ENCODE measurements at regions of chrX and their contacts with region 1.

Region 1: GRCh38 chrX:110167952-110168451 is 149.9 kb downstream of the AMMECR1 start:
- DNase-seq: peak; percentile 60
- H3K4me3 Mint-ChIP-seq: no peak overlapping the region
- H3K27ac Mint-ChIP-seq: no peak overlapping the region
- H3K4me1 Mint-ChIP-seq: peaks cover 2% of the 10 kb centered on the region
- H3K27me3 Mint-ChIP-seq: no peaks in the 10 kb centered on the region

Region 2: DNA sequence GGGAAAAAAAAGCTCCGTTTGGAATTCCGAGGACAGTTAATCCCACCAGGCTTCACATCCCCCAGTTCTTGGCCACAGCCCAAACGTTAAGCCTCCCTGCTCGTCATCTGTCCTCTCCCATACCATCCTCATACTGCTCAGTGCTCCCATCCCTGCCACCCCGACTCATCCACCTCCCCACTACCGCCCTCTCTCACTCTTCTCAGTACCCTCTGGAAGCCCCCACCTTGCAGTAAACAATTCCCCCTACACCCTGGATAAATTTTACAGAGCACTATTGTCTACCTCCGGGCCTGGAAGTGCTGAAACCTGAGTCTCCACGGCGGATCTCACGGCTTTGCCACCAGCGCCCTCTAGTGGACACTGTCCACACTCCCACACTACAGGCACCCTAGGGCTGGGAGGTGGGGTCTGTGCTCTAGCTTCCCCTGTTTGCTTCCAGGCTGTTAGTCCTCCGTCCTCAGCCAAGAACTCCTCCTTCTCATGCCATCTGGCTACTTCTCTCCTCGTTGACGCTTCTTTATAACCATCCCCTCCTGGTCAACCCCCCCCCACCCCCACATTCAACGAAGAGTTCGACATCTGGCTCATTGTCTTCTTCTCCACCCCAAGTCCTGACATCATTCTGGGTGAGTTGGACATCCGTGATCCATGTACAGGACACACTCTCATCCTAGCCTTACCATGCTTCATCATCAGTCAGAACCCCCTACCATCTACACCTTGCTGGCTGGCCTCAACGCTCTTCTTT is 245.1 kb after region 1 on chrX:
- CTCF ChIA-PET with region 1: interaction called, 374 read pairs
- intact Hi-C with region 1: no loop called
- DNase-seq: peak; percentile 77
- H3K4me3 Mint-ChIP-seq: no peak overlapping the region
- H3K27ac Mint-ChIP-seq: no peak overlapping the region
- H3K4me1 Mint-ChIP-seq: peaks cover 5% of the 10 kb centered on the region
- H3K27me3 Mint-ChIP-seq: no peaks in the 10 kb centered on the region

Measured in activated naive CD4-positive, alpha-beta T cell treated with anti-CD3 and anti-CD28 coated beads for 36 hours (primary cell).